ENCODE measurements at regions of chr12 and their contacts with region 1.

Region 1: GRCh38 chr12:13740150-13740547 is 241.3 kb downstream of the GRIN2B start:
- DNase-seq: no peak
- H3K4me3 ChIP-seq: no peak overlapping the region
- H3K27ac ChIP-seq: no peak overlapping the region
- H3K4me1 ChIP-seq: no peaks in the 10 kb centered on the region
- H3K27me3 ChIP-seq: peaks cover 25% of the 10 kb centered on the region
- CTCF ChIP-seq: no peak
- EP300 ChIP-seq: no peak
- RAD21 ChIP-seq: no peak

Region 2: DNA sequence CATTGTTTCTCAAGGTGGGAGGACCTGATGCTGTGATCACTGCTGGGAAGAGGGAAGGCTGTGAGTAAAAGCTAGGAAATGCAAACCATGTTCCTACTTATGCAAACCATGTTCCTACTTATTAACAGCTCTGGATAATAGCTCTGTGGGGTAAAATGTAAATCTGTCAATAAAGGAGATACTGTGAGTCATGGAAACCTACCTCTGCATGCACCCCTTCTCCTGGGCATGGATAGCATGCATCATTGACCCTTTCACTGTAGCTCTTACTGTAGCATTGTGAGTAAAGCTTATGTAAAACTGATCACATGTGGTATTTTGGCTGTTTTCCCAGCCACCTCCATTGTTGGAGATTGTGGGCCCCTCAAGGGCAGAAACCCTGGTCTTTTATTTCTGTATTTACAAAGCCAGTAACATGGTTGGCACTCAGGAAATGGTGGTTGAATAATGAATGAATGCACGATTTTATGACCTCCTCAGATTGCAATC is 12.4 kb before region 1 on chr12:
- CTCF ChIA-PET with region 1: interaction called, 10 read pairs
- POLR2A ChIA-PET with region 1: no interaction called
- DNase-seq: no peak
- H3K4me3 ChIP-seq: no peak overlapping the region
- H3K27ac ChIP-seq: no peak overlapping the region
- H3K4me1 ChIP-seq: no peaks in the 10 kb centered on the region
- H3K27me3 ChIP-seq: no peaks in the 10 kb centered on the region
- CTCF ChIP-seq: no peak
- EP300 ChIP-seq: no peak
- RAD21 ChIP-seq: no peak